H1 (cell line): ENCODE measurements at regions of chr19 and their contacts with region 1.

Region 1: GRCh38 chr19:4815426-4816201 is 15.9 kb downstream of the TICAM1 start:
- DNase-seq: peak; percentile 75 to 88
- H3K4me3 ChIP-seq: peak overlapping the region in 1 of 4 experiments; percentile 30; a peak in 2 of 8 replicates
- H3K27ac ChIP-seq: no peak overlapping the region
- H3K4me1 ChIP-seq: no peaks in the 10 kb centered on the region; a peak in 1 of 7 replicates
- H3K27me3 ChIP-seq: peaks cover 0 to 14% (median 12%) of the 10 kb centered on the region in 4 experiments; a peak in 6 of 7 replicates
- CTCF ChIP-seq: no peak
- EP300 ChIP-seq: no peak
- POLR2A ChIP-seq: no peak
- RAD21 ChIP-seq: no peak

Region 2: GRCh38 chr19:4732680-4733114 is 82.9 kb before region 1 on chr19:
- CTCF ChIA-PET with region 1: interaction called, 20 read pairs
- POLR2A ChIA-PET with region 1: no interaction called
- DNase-seq: peak in 1 of 2 experiments; percentile 66
- H3K4me3 ChIP-seq: peak overlapping the region in 1 of 4 experiments; percentile 40; a peak in 1 of 8 replicates
- H3K27ac ChIP-seq: no peak overlapping the region
- H3K4me1 ChIP-seq: no peaks in the 10 kb centered on the region
- H3K27me3 ChIP-seq: no peaks in the 10 kb centered on the region
- CTCF ChIP-seq: peak; percentile 65 to 92 (median 75)
- EP300 ChIP-seq: no peak
- POLR2A ChIP-seq: no peak
- RAD21 ChIP-seq: peak; percentile 91 to 94

Region 3: GRCh38 chr19:4768934-4769777 is 46.5 kb before region 1 on chr19:
- CTCF ChIA-PET with region 1: no interaction called
- POLR2A ChIA-PET with region 1: no interaction called
- DNase-seq: peak; percentile 57 to 99
- H3K4me3 ChIP-seq: peak overlapping the region in 2 of 4 experiments; percentile 14 to 17; a peak in 2 of 8 replicates
- H3K27ac ChIP-seq: no peak overlapping the region
- H3K4me1 ChIP-seq: peaks cover 0 to 3% (median 0%) of the 10 kb centered on the region in 4 experiments; a peak in 1 of 7 replicates
- H3K27me3 ChIP-seq: 0 out of 7 replicates have a peak, but pooled peaks cover 0 to 2% (median 0%) of the 10 kb centered on the region in 4 experiments
- CTCF ChIP-seq: no peak
- EP300 ChIP-seq: peak in 1 of 2 experiments; percentile 78; a peak in 2 of 3 replicates
- POLR2A ChIP-seq: peak; percentile 62 to 68
- RAD21 ChIP-seq: 0 out of 4 replicates have a peak, but pooled peaks of 1 of the 2 experiments have one; percentile 6

Region 4: DNA sequence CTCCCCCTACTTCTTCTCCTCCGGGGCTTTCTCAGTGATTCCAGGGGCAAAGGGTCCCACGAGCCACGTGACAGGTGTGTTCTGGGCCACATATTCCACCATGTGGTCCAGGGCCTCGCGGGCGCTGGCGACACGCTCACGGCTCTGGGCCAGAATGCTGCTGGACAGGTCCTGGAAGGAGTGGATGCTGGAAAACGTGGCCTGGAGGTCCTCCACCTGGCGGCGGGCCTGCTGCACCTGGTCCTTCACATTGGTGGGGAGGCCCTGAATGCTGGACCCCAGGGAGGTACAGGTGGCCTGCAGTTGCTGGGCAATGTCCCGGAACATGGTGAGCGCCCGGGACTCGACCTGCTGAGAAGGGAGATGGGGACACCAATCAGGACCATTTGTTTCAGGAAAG is 23.6 kb after region 1 on chr19:
- CTCF ChIA-PET with region 1: interaction called, 32 read pairs
- POLR2A ChIA-PET with region 1: interaction called, 3 read pairs
- DNase-seq: no peak
- H3K4me3 ChIP-seq: no peak overlapping the region
- H3K27ac ChIP-seq: no peak overlapping the region
- H3K4me1 ChIP-seq: no peaks in the 10 kb centered on the region
- H3K27me3 ChIP-seq: no peaks in the 10 kb centered on the region; a peak in 1 of 7 replicates
- CTCF ChIP-seq: no peak
- EP300 ChIP-seq: no peak
- POLR2A ChIP-seq: no peak
- RAD21 ChIP-seq: no peak

Region 5: DNA sequence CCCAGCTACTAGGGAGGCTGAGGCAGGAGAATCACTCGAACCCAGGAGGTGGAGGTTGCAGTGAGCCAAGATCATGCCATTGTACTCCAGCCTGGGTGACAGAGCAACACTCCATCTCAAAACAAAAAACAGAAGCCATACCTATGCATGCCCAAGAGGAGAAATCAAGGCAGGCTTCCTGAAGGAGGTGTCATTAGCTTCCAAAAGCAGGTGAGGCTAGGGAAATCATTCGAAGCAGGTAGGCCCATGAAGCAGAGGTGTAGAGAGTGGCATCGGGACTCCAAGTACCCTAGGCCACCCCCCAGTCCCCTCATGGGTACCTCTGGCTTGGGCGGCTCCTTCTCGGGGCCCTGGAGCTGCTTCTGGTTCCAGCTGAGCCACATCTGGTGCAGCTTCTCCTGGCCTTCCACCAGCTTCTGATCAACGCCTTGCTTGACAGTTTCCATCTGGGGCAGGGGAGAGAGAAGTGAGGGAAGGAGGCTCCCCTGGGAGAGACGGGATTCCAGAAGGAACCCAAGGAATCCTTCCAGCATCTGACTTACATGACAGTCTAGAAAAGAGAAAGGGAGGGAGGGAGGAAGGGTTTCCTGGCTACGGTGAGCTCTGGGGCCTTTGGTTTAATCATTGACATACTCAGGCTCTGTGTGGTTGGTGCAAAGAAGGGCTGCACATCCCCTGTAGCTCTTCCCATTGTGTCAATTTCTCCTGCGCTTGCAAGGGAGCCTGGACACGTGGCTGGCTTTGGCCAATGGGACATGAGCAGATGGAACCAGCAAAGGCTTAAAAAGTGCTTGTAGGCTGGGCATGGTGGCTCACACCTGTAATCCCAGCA is 28.9 kb after region 1 on chr19:
- CTCF ChIA-PET with region 1: interaction called, 100 read pairs
- POLR2A ChIA-PET with region 1: interaction called, 3 read pairs
- DNase-seq: no peak
- H3K4me3 ChIP-seq: no peak overlapping the region
- H3K27ac ChIP-seq: no peak overlapping the region
- H3K4me1 ChIP-seq: no peaks in the 10 kb centered on the region
- H3K27me3 ChIP-seq: no peaks in the 10 kb centered on the region
- CTCF ChIP-seq: no peak
- EP300 ChIP-seq: no peak
- POLR2A ChIP-seq: no peak
- RAD21 ChIP-seq: no peak

Region 6: DNA sequence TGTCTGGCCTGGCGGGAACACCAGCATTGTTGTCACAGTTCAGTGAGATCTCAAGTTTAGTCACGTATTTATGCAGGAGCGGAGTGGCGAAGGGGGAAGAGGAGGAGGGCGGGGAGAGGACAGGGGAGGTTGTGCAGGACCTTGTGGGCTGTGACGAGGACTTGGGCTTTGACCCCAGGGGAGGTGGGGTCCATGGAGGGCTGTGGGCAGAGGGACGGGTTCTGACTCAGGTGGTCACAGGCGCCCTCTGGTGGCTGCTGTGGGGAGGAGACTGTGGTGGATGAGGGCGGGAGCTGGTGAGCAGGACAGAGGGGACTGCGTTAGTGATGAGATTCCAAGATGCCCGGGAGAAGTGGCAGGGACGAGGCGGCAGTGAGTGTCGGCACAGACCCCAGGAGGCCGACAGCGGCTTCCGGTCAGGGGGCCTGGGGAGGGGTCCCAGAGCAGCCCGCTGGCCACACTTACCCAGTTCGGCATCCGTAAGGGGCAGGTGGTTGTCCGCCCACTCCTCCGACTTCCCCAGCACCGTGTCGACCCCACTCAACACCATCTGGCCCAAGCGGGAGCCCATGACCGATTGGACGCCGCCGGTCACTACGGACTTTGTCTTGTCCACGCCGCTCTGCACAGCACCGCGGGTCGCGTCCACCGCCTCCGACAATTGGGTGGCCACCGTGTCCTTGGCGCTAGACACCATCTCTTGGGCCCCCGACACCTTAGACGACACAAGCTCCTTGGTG is 36.1 kb after region 1 on chr19:
- CTCF ChIA-PET with region 1: interaction called, 100 read pairs
- POLR2A ChIA-PET with region 1: no interaction called
- DNase-seq: peak; percentile 60 to 94
- H3K4me3 ChIP-seq: no peak overlapping the region
- H3K27ac ChIP-seq: no peak overlapping the region
- H3K4me1 ChIP-seq: no peaks in the 10 kb centered on the region
- H3K27me3 ChIP-seq: no peaks in the 10 kb centered on the region
- CTCF ChIP-seq: peak; percentile 88 to 96 (median 94)
- EP300 ChIP-seq: no peak
- POLR2A ChIP-seq: no peak
- RAD21 ChIP-seq: peak; percentile 71 to 78

Region 7: DNA sequence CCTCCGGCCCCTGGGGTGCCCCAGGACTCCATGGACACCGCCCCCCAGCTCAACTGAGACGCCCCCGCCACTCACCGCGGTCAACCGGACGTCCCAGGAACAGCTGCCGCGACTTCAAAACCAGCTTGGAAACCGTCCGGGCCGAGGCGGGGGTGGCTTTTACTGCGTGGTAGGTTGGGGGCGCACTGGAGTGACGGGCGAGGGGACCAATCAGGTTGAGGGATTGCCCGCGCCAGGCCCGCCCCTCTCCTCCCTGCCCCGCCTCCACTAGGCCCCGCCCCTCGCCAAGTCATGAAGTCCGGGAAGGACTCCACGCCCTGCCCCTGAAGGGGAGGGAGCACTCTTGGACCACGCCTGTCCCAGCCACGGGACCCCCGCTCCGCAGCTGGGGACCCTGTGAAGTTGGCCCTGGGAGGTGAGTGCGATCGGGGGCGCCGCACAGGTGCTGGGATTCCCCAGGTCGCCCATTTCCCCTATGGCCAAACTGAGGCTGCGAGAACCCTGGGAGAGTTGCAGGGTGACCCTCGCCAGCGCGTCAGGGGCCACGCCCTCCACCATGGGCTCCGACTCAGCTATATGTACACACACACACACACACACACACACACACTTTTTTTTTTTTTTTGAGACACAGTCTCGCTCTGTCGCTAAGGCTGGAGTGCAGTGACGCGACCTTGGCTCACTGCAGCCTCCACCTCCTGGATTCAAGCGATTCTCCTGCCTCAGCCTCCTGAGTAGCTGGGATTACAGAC is 52.1 kb after region 1 on chr19 and contains the start of gene PLIN3:
- CTCF ChIA-PET with region 1: interaction called, 17 read pairs
- POLR2A ChIA-PET with region 1: interaction called, 4 read pairs
- DNase-seq: peak; percentile 81 to 99
- H3K4me3 ChIP-seq: peak within 1 kb of the TSS; percentile 77 to 98 (median 84)
- H3K27ac ChIP-seq: peak within 1 kb of the TSS; percentile 46
- H3K4me1 ChIP-seq: peaks cover 0 to 5% (median 2%) of the 10 kb centered on the region in 4 experiments; a peak in 3 of 7 replicates
- H3K27me3 ChIP-seq: no peaks in the 10 kb centered on the region
- CTCF ChIP-seq: no peak
- EP300 ChIP-seq: no peak
- POLR2A ChIP-seq: no peak
- RAD21 ChIP-seq: no peak
- total RNA-seq, gene PLIN3: 60.7 and 68.1 TPM in 2 replicates

Region 8: DNA sequence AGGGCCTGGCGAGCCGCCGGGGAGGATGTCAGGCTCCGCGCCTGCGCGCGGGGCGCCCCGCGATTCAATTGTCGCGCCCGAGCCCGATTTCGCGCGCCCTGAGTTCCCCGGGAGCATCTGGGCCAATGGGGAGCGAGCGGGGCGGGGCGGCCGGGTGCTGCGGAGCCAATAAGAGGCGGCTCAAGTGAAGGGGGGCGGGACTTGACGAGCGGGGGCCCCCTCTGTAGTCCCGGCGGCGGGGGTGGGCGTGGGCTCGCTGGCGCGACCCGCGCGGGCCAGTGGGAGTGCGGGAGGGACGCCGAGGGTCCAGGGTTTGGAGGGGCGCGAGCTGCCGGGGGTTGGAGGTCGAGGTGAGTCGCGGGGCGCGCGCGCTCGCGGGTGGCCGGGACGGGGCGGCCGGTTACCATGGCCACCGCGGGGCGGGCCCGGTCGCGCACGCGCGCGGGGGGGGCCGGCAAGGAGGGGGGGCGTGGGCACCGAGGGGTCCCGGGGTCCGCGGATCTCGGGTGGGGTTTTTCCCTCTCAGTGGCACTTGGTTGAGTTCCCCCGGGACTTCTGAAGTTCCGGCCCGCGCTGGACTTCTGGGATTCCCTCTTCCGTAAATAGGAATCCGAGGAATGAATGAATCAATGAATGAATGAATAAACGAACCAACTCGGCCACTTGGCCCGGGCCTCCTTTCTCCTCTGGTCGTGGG is 94.4 kb after region 1 on chr19:
- CTCF ChIA-PET with region 1: interaction called, 26 read pairs
- POLR2A ChIA-PET with region 1: interaction called, 5 read pairs
- DNase-seq: peak; percentile 64 to 92
- H3K4me3 ChIP-seq: peak overlapping the region; percentile 46 to 83 (median 56)
- H3K27ac ChIP-seq: no peak overlapping the region; the same call in 1 of the 2 replicates
- H3K4me1 ChIP-seq: peaks cover 0 to 14% (median 11%) of the 10 kb centered on the region in 4 experiments; a peak in 6 of 7 replicates
- H3K27me3 ChIP-seq: no peaks in the 10 kb centered on the region; a peak in 2 of 7 replicates
- CTCF ChIP-seq: no peak
- EP300 ChIP-seq: no peak
- POLR2A ChIP-seq: no peak; a peak in 1 of 3 replicates
- RAD21 ChIP-seq: no peak